SK-N-SH (cell line): ENCODE measurements at regions of chr17 and their contacts with region 1.

Region 1: DNA sequence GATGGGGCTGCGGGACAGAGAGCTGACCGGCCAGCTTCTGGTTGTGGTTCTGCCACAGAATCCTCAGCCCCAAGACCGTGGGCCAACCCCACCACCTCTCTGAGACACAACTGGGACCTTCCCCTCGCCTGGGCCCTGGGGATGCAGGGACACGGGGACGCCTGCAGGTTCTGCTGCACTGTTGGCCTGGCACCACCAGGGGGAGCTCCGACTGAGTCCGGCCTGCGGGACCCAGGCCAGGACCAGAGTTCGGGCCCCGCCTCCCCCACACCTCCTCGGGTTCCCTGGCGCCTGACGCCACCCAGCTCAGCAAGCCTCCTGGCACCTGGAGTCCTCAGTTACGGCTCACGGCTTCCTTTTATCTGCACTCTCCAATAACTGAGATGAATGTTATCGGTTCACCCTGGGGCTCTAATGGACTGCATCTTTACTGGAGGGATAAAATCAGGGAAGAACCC is 27.3 kb downstream of the TBC1D16 start:
- DNase-seq: peak; percentile 98
- H3K4me3 ChIP-seq: no peak overlapping the region; a peak in 1 of 4 replicates
- H3K27ac ChIP-seq: no peak overlapping the region
- H3K4me1 ChIP-seq: peaks cover 0 to 5% of the 10 kb centered on the region in 2 experiments; a peak in 1 of 4 replicates
- H3K27me3 ChIP-seq: no peaks in the 10 kb centered on the region
- CTCF ChIP-seq: peak; percentile 98
- EP300 ChIP-seq: no peak
- RAD21 ChIP-seq: peak; percentile 66

Region 2: DNA sequence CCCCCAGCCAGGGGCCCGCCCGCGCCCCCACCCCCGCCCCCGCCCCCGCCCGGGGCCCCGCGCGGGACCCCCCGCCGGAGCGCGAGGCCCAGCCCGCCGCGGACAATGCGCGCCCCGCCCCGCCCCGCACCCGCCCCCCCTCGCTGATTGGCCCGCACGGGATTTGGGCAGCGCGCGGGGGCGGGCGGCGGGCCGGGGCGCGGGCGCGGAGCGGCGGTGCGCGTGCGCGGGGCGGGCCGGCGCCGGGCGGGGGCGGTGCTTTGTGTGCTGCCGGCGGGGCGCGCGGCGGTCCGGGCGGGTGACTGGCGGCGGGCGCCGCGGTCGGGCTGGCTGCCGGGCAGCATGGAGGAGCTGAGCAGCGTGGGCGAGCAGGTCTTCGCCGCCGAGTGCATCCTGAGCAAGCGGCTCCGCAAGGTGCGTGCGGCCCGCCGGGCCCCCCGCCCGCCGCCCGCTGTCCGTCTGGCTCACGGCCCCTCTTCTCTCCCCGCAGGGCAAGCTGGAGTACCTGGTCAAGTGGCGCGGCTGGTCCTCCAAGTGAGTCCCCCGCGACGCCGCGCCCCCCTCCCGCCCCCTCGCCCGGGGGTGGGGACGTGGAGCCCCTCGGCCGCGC is 230.4 kb before region 1 on chr17 and contains the start of gene CBX2:
- CTCF ChIA-PET with region 1: interaction called, 10 read pairs
- POLR2A ChIA-PET with region 1: no interaction called
- DNase-seq: peak; percentile 100
- H3K4me3 ChIP-seq: peak within 1 kb of the TSS; percentile 84 to 93
- H3K27ac ChIP-seq: peak within 1 kb of the TSS; percentile 7 to 83; a peak in 2 of 4 replicates
- H3K4me1 ChIP-seq: peaks cover 0 to 20% of the 10 kb centered on the region in 2 experiments; a peak in 3 of 4 replicates
- H3K27me3 ChIP-seq: peaks cover 23% of the 10 kb centered on the region
- CTCF ChIP-seq: peak; percentile 27; the same call in 1 of the 2 replicates
- EP300 ChIP-seq: no peak
- RAD21 ChIP-seq: no peak
- polyA plus RNA-seq, gene CBX2: 19.7 and 22.4 TPM in 2 replicates

Region 3: DNA sequence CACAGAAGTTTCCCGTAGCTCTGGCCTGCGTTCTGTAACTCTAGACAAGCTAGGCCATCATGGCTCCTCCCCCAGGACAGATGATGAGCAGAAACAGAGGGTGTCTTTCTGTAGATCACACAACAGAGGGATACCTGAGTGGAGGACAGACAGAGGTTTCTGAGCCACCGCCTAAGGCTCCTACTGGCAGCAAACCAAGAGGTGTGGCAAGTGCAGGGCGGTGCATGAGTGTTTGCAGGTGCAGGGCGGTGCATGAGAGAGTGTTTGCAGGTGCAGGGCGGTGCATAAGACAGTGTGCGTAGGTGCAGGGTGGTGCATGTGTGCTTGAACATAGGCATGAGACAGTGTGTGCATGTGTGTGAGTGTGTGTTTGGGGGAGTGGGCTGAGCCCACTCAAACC is 116.0 kb before region 1 on chr17:
- CTCF ChIA-PET with region 1: interaction called, 12 read pairs
- POLR2A ChIA-PET with region 1: no interaction called
- DNase-seq: no peak
- H3K4me3 ChIP-seq: no peak overlapping the region
- H3K27ac ChIP-seq: no peak overlapping the region
- H3K4me1 ChIP-seq: peaks cover 0 to 21% of the 10 kb centered on the region in 2 experiments; a peak in 1 of 4 replicates
- H3K27me3 ChIP-seq: peaks cover 22% of the 10 kb centered on the region; the same call in 1 of the 2 replicates
- CTCF ChIP-seq: no peak
- EP300 ChIP-seq: no peak
- RAD21 ChIP-seq: no peak

Region 4: DNA sequence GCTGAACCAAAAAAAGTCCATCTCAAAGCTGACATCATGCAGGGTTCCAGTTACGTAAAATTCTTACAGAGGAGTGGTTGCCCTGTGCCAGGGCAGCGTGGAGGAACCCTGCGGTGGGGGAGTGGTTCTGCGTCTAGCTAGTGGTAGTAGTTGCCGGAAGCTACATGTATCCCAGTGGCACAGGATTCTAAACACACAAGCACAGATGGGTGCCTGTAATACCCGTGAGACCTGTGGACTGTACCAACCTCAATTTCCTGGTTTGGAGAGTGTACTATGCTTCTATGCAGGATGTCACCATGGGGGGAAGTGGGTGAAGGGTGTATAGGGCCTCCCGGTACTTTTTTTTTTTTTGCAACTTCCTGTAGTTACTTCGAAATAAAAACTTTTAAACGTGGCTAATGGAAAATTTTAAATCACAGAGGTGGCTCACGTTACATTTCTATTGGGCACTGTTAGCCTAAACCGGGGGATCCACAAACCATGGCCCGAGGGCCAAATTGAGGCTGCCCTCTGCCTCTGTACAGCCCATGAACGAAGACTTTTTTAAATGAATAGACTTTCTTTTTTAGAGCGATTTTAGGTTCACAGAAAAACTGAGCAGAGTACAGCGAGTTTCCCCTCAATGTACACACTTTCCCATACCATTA is 11.3 kb before region 1 on chr17:
- CTCF ChIA-PET with region 1: interaction called, 209 read pairs
- POLR2A ChIA-PET with region 1: no interaction called
- DNase-seq: no peak
- H3K4me3 ChIP-seq: no peak overlapping the region
- H3K27ac ChIP-seq: no peak overlapping the region
- H3K4me1 ChIP-seq: peaks cover 0 to 6% of the 10 kb centered on the region in 2 experiments; a peak in 1 of 4 replicates
- H3K27me3 ChIP-seq: no peaks in the 10 kb centered on the region
- CTCF ChIP-seq: no peak
- EP300 ChIP-seq: no peak
- RAD21 ChIP-seq: no peak

Region 5: DNA sequence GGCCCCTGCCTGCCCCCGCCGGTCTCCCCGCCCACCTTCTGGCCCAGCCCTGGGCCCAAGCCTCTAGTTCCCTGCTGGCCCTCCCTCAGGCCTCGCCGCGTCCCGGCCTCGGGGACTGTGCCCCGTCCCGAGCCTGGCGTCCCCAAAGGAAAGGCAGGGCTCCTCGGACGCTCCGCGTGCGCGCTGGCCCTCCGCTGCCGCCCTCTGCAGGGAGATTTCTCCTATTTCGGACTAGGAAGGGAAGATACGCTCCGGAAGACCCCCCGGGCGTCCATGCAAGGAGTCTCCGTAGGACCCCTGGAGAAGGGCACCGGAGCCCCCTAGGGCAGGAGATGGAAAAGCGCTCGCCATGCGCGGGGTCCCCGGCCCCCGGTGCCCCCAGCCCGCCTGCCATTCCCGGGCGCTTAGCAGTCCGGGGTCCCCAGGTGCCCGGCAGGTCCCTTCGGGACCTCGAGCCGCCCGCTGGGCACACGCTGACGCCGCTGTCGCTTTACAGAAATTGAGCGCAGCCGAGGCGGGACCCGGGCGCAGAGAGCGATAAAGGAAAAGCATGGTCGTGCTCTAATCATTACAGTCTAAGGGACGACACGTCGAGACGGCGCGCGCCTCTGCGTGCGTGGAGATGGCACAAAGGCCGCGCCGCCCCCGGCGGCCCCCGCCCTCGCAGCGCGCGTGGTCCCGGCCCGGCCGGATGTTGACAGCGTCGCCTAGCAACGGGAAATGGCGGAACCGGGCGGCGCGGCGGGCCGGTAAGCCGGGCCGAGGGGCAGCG is 27.7 kb after region 1 on chr17 and contains the start of gene CCDC40:
- CTCF ChIA-PET with region 1: interaction called, 72 read pairs
- POLR2A ChIA-PET with region 1: no interaction called
- DNase-seq: peak; percentile 95
- H3K4me3 ChIP-seq: peak within 1 kb of the TSS; percentile 82 to 100
- H3K27ac ChIP-seq: peak within 1 kb of the TSS; percentile 91 to 96
- H3K4me1 ChIP-seq: peaks cover 3 to 31% of the 10 kb centered on the region in 2 experiments; a peak in 2 of 4 replicates
- H3K27me3 ChIP-seq: no peaks in the 10 kb centered on the region
- CTCF ChIP-seq: no peak; the same call in none of the 2 replicates
- EP300 ChIP-seq: no peak
- RAD21 ChIP-seq: no peak
- polyA plus RNA-seq, gene CCDC40: 17.3 and 21.6 TPM in 2 replicates

Region 6: GRCh38 chr17:80226762-80227555 is 218.5 kb after region 1 on chr17:
- CTCF ChIA-PET with region 1: no interaction called
- POLR2A ChIA-PET with region 1: no interaction called
- DNase-seq: no peak
- H3K4me3 ChIP-seq: no peak overlapping the region
- H3K27ac ChIP-seq: no peak overlapping the region
- H3K4me1 ChIP-seq: no peaks in the 10 kb centered on the region; a peak in 1 of 4 replicates
- H3K27me3 ChIP-seq: no peaks in the 10 kb centered on the region
- CTCF ChIP-seq: no peak
- EP300 ChIP-seq: no peak
- RAD21 ChIP-seq: no peak